Gastrocnemius medialis (tissue), 4 donors: ENCODE measurements at regions of chr6 and their contacts with region 1.

Region 1: DNA sequence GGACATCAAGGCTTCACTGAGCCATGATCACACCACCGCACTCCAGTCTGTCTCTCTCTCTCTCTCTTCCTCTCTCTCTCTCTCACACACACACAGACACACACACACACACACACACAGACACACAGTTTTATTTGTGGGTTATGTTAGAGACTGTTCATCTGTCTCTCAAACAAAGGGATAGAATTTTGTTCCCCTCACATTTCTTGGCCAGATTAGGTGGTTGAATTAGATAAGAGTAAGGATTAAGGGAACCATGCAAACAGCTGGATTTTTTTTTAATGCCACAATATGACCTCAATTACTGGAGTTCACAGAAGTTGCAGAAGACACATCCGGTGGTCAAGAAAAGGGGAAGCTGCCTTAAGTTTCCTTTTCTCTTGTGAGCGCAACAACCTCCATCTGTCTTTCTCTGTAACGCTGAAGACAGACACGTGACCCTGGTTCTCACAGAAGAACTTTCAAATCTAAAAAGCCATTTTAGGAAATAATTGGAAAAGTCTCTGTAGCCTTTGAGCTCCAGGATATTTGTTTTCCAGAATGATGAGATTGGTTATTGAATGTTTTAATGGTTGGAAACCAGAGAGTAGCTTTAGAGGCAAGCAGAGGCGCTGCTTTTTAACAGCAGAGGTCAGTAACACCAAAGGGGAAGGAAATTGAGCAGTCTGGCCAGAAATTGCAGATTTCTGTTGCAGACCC is 33.0 kb upstream of the LGSN start:
- DNase-seq: peak in 1 of 2 donors; percentile 10
- ATAC-seq: peak; percentile 81 to 83
- H3K4me3 ChIP-seq: peak overlapping the region in 1 of 4 donors; percentile 12
- H3K27ac ChIP-seq: peak overlapping the region in 1 of 4 donors; percentile 10
- H3K4me1 ChIP-seq: peaks cover 0 to 11% of the 10 kb centered on the region in 2 donors
- H3K27me3 ChIP-seq: no peaks in the 10 kb centered on the region
- CTCF ChIP-seq: peak; percentile 38 to 73 (median 56)
- POLR2A ChIP-seq: no peak

Region 2: GRCh38 chr6:63476302-63476701 is 123.6 kb after region 1 on chr6:
- in situ Hi-C with region 1: no loop called
- intact Hi-C with region 1: loop called (anchors 2 kb)
- DNase-seq: peak; percentile 11 to 43
- ATAC-seq: peak; percentile 62 to 70
- H3K4me3 ChIP-seq: peak overlapping the region in 1 of 4 donors; percentile 5
- H3K27ac ChIP-seq: peak overlapping the region; percentile 86 to 95 (median 92)
- H3K4me1 ChIP-seq: peaks cover 15 to 21% of the 10 kb centered on the region in 2 donors
- H3K27me3 ChIP-seq: no peaks in the 10 kb centered on the region
- CTCF ChIP-seq: peak in 2 of 5 experiments; percentile 12 to 17
- POLR2A ChIP-seq: no peak

Region 3: DNA sequence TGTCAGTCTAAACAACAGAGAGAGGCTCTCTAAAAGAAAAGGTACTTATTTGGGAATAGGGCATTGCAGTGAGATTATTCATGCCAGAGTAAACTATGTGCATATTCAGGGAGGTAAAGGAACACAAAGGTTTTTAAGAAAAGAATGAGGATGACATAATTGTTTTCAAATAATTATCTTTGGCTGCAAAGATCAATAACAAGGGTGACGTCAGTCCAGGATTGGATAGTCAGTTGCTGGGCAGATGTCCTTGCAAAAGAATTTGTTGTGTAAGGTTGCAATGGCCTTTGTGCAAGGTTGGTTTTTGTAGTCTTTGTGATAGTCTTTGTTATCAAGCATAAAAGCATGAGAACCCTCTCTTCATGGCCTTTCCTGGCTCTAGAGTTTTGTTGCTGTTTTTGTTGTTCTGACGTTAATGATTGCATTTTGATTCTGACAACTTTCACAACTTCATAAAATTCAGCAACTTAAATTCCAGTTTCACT is 237.2 kb after region 1 on chr6:
- in situ Hi-C with region 1: loop called in 3 of 4 experiments (anchors 5 to 10 kb)
- intact Hi-C with region 1: no loop called
- DNase-seq: no peak
- ATAC-seq: no peak
- H3K4me3 ChIP-seq: no peak overlapping the region
- H3K27ac ChIP-seq: no peak overlapping the region
- H3K4me1 ChIP-seq: no peaks in the 10 kb centered on the region
- H3K27me3 ChIP-seq: no peaks in the 10 kb centered on the region
- CTCF ChIP-seq: no peak
- POLR2A ChIP-seq: no peak

Region 4: DNA sequence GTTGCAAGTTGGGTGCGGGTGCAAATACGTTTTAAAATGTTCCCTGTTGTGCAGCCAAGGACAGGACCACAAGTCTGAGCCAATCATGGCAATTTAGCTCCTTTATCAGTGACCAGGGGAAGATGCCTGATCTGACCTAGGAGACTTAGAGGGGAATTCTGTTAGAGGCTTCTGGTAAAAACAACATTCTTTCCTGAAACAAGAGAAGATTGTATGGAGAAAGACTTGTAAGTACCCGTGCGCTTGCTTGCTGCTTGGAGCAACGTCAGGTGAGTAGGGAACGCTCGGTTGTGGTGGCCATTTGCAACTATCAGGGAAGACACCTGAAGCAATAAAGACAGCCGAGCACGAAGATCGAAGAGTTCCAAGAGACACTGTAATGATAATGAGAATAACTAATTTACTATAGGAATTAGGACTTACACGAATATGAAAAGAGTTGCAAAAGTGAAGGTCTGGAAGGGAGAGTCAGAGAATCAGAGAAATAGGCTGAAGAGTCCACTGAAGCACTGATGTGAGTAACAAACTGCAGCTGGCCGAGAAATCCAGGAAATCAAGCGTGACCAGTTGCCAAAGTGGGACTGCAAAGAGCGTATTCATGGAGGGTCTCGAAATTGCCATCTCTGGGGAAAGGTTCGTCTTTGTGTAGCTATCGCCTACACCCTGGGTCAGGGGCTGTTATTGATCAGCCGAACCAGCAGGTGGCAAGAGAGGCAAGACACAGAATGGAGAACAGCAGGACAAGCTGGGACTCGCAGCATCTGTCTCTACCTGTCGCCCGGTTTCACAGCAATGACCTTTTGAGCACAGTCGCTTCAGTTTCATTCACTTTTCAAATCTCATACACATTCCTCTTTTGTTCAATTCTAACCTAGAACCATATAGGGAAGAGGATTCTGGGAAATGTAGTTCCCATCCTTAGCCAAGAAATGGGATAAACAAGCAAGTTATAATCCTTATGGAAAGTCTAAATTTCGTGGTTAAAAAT is 245.6 kb after region 1 on chr6:
- in situ Hi-C with region 1: loop called in 3 of 4 experiments (anchors 5 to 10 kb)
- intact Hi-C with region 1: loop called (anchors 1 kb)
- DNase-seq: peak; percentile 31 to 51
- ATAC-seq: peak; percentile 91 to 97
- H3K4me3 ChIP-seq: peak overlapping the region; percentile 56 to 63 (median 62)
- H3K27ac ChIP-seq: no peak overlapping the region
- H3K4me1 ChIP-seq: peaks cover 5% of the 10 kb centered on the region in 2 donors
- H3K27me3 ChIP-seq: no peaks in the 10 kb centered on the region
- CTCF ChIP-seq: peak; percentile 77 to 89 (median 83)
- POLR2A ChIP-seq: no peak

Region 5: DNA sequence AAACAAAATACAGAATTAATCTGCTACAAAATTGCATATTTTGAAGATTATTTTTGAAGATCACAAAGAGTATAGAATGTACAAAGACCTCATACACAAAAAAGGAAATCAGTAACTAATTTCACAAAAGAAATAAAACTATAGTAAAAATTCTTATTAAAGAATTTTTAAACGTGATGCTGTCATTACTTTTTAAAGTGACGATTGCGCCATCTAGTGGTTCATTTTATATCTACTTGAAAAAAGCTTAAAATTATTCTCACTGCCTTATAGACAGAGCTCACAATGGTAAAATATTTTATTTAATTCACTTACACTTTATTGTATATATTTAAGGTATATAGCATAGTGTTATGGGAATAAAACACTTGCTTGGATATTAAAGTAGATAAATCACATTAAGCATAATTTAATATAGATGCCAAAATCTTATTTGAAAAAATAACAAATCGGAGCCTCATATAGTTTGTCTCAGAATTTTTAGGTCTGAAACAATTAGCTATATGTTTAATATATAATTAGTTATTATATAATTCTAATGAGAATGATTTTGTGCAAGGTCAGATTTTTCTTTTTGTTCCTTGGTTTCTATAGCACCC is 411.7 kb after region 1 on chr6:
- in situ Hi-C with region 1: loop called in 3 of 4 experiments (anchors 10 kb)
- intact Hi-C with region 1: loop called (anchors 1 kb)
- DNase-seq: no peak
- ATAC-seq: peak in 1 of 2 donors; percentile 56
- H3K4me3 ChIP-seq: no peak overlapping the region
- H3K27ac ChIP-seq: no peak overlapping the region
- H3K4me1 ChIP-seq: no peaks in the 10 kb centered on the region
- H3K27me3 ChIP-seq: no peaks in the 10 kb centered on the region
- CTCF ChIP-seq: peak; percentile 40 to 73 (median 55)
- POLR2A ChIP-seq: no peak

Region 6: GRCh38 chr6:63802606-63803206 is 450.0 kb after region 1 on chr6:
- in situ Hi-C with region 1: loop called in 1 of 4 experiments (anchors 25 kb)
- intact Hi-C with region 1: loop called (anchors 2 kb)
- DNase-seq: no peak
- ATAC-seq: no peak
- H3K4me3 ChIP-seq: no peak overlapping the region
- H3K27ac ChIP-seq: no peak overlapping the region
- H3K4me1 ChIP-seq: peaks cover 13 to 19% of the 10 kb centered on the region in 2 donors
- H3K27me3 ChIP-seq: peaks cover 0 to 1% (median 0%) of the 10 kb centered on the region in 3 donors
- CTCF ChIP-seq: peak; percentile 15 to 37 (median 28)
- POLR2A ChIP-seq: no peak